ENCODE measurements at regions of chr7 and their contacts with region 1.

Region 1: GRCh38 chr7:92528188-92528957 is at the starts of genes PEX1 and RBM48:
- DNase-seq: peak; percentile 97
- ATAC-seq: peak; percentile 94
- H3K4me3 Mint-ChIP-seq: peak within 1 kb of the TSS; percentile 84
- H3K27ac Mint-ChIP-seq: peak within 1 kb of the TSS; percentile 98
- H3K4me1 Mint-ChIP-seq: peaks cover 25% of the 10 kb centered on the region
- H3K27me3 Mint-ChIP-seq: no peaks in the 10 kb centered on the region
- CTCF ChIP-seq: no peak
- total RNA-seq, gene PEX1: 16.6 to 16.9 TPM
- total RNA-seq, gene RBM48: 11.5 to 13.4 TPM

Region 2: DNA sequence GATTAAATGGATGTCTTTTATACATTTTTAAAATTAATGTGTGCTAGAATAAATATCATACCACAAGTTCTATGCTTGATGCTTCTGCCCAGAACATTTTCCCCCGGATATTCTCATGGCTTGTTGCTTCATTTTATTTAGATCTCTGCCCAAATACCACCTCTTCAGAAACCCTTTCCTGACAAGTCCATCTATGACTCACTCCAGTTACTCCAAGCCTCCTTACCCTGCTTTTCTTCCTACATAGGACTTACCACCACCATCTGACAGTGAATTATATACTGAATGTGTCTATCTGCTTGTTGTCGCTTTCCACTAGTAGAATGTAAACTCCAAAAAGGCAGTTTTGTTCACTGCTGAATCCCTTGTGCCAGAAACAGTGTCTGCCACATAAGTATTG is 31.5 kb before region 1 on chr7:
- CTCF ChIA-PET with region 1: no interaction called
- POLR2A ChIA-PET with region 1: no interaction called
- intact Hi-C with region 1: no loop called
- DNase-seq: no peak
- ATAC-seq: no peak
- H3K4me3 Mint-ChIP-seq: no peak overlapping the region
- H3K27ac Mint-ChIP-seq: no peak overlapping the region
- H3K4me1 Mint-ChIP-seq: no peaks in the 10 kb centered on the region
- H3K27me3 Mint-ChIP-seq: no peaks in the 10 kb centered on the region
- CTCF ChIP-seq: no peak

Region 3: GRCh38 chr7:92584996-92585395 is 56.6 kb after region 1 on chr7:
- CTCF ChIA-PET with region 1: interaction called, 3 read pairs
- POLR2A ChIA-PET with region 1: interaction called, 7 read pairs
- intact Hi-C with region 1: loop called (anchors 5 kb)
- DNase-seq: peak; percentile 24
- ATAC-seq: peak; percentile 27
- H3K4me3 Mint-ChIP-seq: no peak overlapping the region
- H3K27ac Mint-ChIP-seq: peak overlapping the region; percentile 87
- H3K4me1 Mint-ChIP-seq: peaks cover 55% of the 10 kb centered on the region
- H3K27me3 Mint-ChIP-seq: no peaks in the 10 kb centered on the region
- CTCF ChIP-seq: no peak

Measured in activated CD8-positive, alpha-beta T cell treated with anti-CD3 and anti-CD28 coated beads for 36 hours (primary cell).